HAP-1 (cell line): ENCODE measurements at regions of chr13 and their contacts with region 1.

Region 1: DNA sequence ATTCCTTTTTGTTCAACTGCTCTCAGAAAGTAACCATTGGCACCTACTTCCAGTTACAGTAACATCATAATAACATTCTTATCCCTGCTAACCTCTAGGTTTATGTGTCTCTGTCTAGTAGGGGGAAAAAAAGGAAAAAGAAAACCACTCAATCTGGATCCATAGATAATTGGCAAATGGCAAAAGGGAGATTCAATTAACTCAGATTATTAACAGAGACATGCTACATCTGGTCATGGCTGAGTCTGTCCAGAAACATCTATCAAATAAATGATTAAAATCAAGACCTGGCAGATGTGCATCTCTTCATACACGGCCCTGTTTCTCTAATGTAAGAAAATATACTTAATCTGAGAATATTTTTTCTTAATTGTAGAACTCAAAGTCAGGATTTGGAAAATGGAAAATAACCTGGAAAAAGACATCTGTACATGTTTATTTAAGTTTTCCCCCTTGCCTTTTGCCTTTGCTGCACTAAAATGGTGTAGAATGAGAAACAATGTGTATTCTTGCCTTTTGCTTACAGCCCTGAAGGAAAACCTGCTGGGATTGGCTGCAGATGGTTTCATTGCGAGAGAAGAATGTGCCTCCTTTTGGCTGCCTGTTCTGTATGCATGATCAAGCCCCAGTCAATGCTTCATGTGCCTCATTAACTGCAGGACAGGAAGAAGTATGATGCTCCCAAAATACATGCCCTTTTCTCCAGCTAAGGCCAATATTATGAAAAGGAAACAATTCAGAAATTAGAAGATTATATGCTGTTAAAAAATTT is 921.6 kb upstream of the PCDH20 start:
- DNase-seq: no peak
- H3K4me3 ChIP-seq: no peak overlapping the region
- H3K4me1 ChIP-seq: no peaks in the 10 kb centered on the region
- H3K27me3 ChIP-seq: no peaks in the 10 kb centered on the region

Region 2: DNA sequence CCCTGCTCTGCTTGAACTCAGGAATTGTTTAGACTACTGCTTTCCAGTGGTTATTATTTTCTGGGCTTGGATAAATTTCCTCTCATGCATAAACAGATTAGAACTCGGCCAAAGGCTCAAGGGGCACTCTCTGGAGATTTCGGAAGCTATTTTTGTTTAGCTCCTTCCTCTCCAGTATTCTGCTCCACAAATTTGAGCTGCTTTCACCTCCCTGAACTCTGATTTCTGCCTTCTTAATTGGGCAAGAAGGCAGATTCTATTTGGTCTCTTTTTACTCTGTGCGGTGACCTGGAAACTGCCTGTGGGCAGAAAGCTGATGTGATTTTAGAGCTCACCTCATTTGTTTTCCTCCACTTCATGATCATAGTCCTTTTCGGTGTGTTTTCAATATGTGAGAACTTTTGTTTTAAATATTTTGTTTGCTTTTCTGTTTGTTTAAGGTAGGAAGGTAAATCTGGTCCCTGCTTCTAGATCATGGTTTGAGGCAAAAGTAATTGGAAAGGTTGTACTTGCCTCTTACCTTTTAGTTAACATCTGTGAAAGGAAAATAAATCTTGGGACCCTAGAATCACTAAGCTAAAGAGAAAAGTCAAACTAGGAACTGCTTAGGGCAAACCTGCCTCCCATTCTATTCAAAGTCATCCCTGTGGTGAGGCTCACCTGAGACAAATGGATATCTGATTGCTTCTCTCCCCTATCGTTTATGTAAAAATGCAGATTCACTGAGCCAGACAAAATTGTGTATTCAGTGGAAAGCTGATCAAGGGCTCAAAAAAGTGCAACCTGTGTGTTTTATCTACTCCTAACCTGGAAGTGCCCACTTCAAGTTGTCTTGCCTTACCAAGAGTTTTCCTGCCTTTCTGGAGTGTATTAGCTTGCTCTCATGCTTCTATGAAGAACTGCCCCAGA is 207.0 kb before region 1 on chr13:
- in situ Hi-C with region 1: loop called (anchors 25 kb)
- DNase-seq: no peak
- H3K4me3 ChIP-seq: no peak overlapping the region
- H3K4me1 ChIP-seq: 0 out of 2 replicates have a peak, but pooled peaks cover 2% of the 10 kb centered on the region
- H3K27me3 ChIP-seq: no peaks in the 10 kb centered on the region